Posterior vena cava (tissue), 2 donors: ENCODE measurements at regions of chr5 and their contacts with region 1.

Region 1: DNA sequence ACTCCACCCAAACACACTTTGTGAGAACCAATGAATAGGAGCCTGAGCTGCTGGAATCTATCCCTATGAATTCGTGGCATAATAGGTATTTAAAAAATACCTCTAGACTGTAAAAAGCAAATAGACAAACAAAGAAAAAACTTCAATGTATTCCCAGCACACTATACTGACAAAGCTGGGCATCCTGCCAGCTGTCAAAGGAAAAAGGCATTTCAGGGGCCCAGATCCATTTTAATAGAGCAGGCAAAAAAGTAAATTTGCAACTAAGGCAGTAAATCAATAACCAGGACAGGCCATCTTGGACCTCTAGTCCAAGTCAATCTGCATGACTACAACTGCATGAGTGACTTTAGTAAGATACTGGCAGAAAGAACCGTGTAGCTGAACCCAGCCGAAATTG is 25.6 kb upstream of the LARP1 start:
- DNase-seq: no peak

Region 2: DNA sequence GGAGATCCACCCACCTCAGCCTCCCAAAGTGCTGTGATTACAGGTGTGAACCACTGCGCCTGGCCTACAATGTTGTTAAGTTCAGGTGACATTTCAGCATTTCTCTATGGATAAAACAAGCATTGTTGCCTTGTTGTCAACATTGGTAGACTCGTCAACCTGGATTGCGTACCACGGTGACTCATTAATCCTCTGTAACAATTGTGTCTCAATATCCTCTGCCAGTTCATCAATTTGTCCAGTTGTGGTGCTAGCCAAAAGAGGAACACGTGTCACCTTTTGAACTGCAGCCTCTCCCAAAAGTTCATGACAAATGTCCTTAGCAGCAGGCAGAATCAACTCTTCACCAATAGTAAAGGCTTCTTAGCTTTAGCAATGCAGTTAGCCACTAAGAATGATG is 20.8 kb before region 1 on chr5:
- intact Hi-C with region 1: loop called in 1 of 2 experiments (anchors 1 kb)
- DNase-seq: no peak

Region 3: GRCh38 chr5:154786414-154786813 is 56.8 kb after region 1 on chr5:
- intact Hi-C with region 1: no loop called
- DNase-seq: no peak

Region 4: GRCh38 chr5:154801083-154801482 is 71.5 kb after region 1 on chr5:
- intact Hi-C with region 1: no loop called
- DNase-seq: no peak